HEK293 (cell line): ENCODE measurements at regions of chr6 and their contacts with region 1.

Region 1: DNA sequence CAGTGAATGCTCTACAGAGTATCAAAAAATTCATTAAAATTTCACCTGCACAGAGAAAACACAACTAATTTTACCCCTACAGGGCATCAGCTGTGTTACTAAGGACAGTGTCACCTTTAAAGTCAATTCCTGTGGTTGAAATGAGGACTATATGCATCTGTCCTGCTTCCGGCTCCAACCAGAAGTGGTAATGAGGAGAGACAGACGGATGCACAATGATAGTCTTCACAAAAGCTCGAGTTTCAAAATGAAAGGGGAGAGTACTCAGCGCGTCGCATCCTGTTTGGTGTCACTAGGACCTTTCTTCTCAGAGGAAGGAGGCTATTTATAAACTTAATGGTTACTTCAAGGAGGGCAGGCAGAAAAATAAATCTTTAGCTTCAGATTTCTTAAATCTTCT is 86.5 kb downstream of the LYRM4 start:
- H3K4me3 ChIP-seq: no peak overlapping the region
- H3K27ac ChIP-seq: no peak overlapping the region
- H3K4me1 ChIP-seq: no peaks in the 10 kb centered on the region
- CTCF ChIP-seq: no peak

Region 2: DNA sequence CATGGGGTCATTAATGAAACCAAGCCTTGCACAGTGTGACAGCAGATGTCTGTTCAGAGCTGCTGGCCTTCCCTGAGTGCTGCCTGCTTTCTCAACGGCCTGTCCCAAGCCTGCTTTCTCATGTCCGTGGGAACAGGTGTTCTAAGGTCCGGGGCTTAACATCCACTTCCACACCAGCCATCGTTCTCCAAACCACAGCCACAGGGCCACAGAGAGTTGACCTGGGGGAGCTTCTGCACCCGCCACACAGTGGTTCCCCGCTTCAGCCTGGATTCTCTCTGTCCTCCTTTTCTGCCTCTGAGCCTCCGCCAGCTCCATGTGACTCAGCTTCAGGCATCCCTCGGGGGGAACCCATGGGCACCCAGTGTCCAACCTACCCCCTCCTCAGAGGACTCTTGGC is 116.0 kb before region 1 on chr6:
- CTCF ChIA-PET with region 1: interaction called, 11 read pairs
- POLR2A ChIA-PET with region 1: no interaction called
- H3K4me3 ChIP-seq: no peak overlapping the region
- H3K27ac ChIP-seq: no peak overlapping the region
- H3K4me1 ChIP-seq: no peaks in the 10 kb centered on the region
- CTCF ChIP-seq: no peak

Region 3: GRCh38 chr6:5162355-5162754 is 11.9 kb before region 1 on chr6:
- CTCF ChIA-PET with region 1: interaction called, 38 read pairs
- POLR2A ChIA-PET with region 1: no interaction called
- H3K4me3 ChIP-seq: no peak overlapping the region
- H3K27ac ChIP-seq: no peak overlapping the region
- H3K4me1 ChIP-seq: peaks cover 2% of the 10 kb centered on the region; the same call in 1 of the 2 replicates
- CTCF ChIP-seq: no peak

Region 4: GRCh38 chr6:5188646-5189045 is 14.4 kb after region 1 on chr6:
- CTCF ChIA-PET with region 1: interaction called, 11 read pairs
- POLR2A ChIA-PET with region 1: no interaction called
- H3K4me3 ChIP-seq: no peak overlapping the region
- H3K27ac ChIP-seq: no peak overlapping the region
- H3K4me1 ChIP-seq: peaks cover 3% of the 10 kb centered on the region; the same call in 1 of the 2 replicates
- CTCF ChIP-seq: no peak

Region 5: GRCh38 chr6:5234874-5235273 is 60.6 kb after region 1 on chr6:
- CTCF ChIA-PET with region 1: no interaction called
- POLR2A ChIA-PET with region 1: no interaction called
- H3K4me3 ChIP-seq: no peak overlapping the region
- H3K27ac ChIP-seq: no peak overlapping the region
- H3K4me1 ChIP-seq: peaks cover 6% of the 10 kb centered on the region; the same call in 1 of the 2 replicates
- CTCF ChIP-seq: no peak